ENCODE measurements at regions of chr2 and their contacts with region 1.

Region 1: GRCh38 chr2:96174251-96175144 is 29.3 kb upstream of the DUSP2 start:
- DNase-seq: peak; percentile 33 to 90
- H3K4me3 ChIP-seq: no peak overlapping the region
- H3K27ac ChIP-seq: no peak overlapping the region
- H3K4me1 ChIP-seq: no peaks in the 10 kb centered on the region
- H3K27me3 ChIP-seq: no peaks in the 10 kb centered on the region
- CTCF ChIP-seq: peak; percentile 90 to 96 (median 94)
- EP300 ChIP-seq: no peak
- POLR2A ChIP-seq: no peak
- RAD21 ChIP-seq: peak; percentile 93 to 96

Region 2: GRCh38 chr2:96024336-96025193 is 149.9 kb before region 1 on chr2:
- CTCF ChIA-PET with region 1: interaction called, 40 read pairs
- POLR2A ChIA-PET with region 1: no interaction called
- DNase-seq: no peak
- H3K4me3 ChIP-seq: no peak overlapping the region
- H3K27ac ChIP-seq: no peak overlapping the region
- H3K4me1 ChIP-seq: no peaks in the 10 kb centered on the region
- H3K27me3 ChIP-seq: no peaks in the 10 kb centered on the region
- CTCF ChIP-seq: peak in 2 of 3 experiments; percentile 19 to 20; a peak in 3 of 4 replicates
- EP300 ChIP-seq: no peak
- POLR2A ChIP-seq: no peak
- RAD21 ChIP-seq: 0 out of 4 replicates have a peak, but pooled peaks of 1 of the 2 experiments have one; percentile 7

Region 3: GRCh38 chr2:96091533-96092334 is 82.8 kb before region 1 on chr2:
- CTCF ChIA-PET with region 1: interaction called, 12 read pairs
- POLR2A ChIA-PET with region 1: no interaction called
- DNase-seq: peak in 1 of 2 experiments; percentile 54
- H3K4me3 ChIP-seq: no peak overlapping the region
- H3K27ac ChIP-seq: no peak overlapping the region
- H3K4me1 ChIP-seq: peaks cover 3 to 24% (median 10%) of the 10 kb centered on the region in 4 experiments
- H3K27me3 ChIP-seq: no peaks in the 10 kb centered on the region; a peak in 1 of 7 replicates
- CTCF ChIP-seq: no peak
- EP300 ChIP-seq: no peak
- POLR2A ChIP-seq: no peak
- RAD21 ChIP-seq: no peak

Region 4: GRCh38 chr2:96108541-96109360 is 65.7 kb before region 1 on chr2:
- CTCF ChIA-PET with region 1: interaction called, 21 read pairs
- POLR2A ChIA-PET with region 1: no interaction called
- DNase-seq: no peak
- H3K4me3 ChIP-seq: peak overlapping the region in 1 of 4 experiments; percentile 35; a peak in 1 of 8 replicates
- H3K27ac ChIP-seq: peak overlapping the region; percentile 15; the same call in 1 of the 2 replicates
- H3K4me1 ChIP-seq: peaks cover 0 to 25% (median 17%) of the 10 kb centered on the region in 4 experiments; a peak in 6 of 7 replicates
- H3K27me3 ChIP-seq: no peaks in the 10 kb centered on the region
- CTCF ChIP-seq: no peak
- EP300 ChIP-seq: peak in 1 of 2 experiments; percentile 26; a peak in 1 of 3 replicates
- POLR2A ChIP-seq: no peak
- RAD21 ChIP-seq: no peak

Region 5: DNA sequence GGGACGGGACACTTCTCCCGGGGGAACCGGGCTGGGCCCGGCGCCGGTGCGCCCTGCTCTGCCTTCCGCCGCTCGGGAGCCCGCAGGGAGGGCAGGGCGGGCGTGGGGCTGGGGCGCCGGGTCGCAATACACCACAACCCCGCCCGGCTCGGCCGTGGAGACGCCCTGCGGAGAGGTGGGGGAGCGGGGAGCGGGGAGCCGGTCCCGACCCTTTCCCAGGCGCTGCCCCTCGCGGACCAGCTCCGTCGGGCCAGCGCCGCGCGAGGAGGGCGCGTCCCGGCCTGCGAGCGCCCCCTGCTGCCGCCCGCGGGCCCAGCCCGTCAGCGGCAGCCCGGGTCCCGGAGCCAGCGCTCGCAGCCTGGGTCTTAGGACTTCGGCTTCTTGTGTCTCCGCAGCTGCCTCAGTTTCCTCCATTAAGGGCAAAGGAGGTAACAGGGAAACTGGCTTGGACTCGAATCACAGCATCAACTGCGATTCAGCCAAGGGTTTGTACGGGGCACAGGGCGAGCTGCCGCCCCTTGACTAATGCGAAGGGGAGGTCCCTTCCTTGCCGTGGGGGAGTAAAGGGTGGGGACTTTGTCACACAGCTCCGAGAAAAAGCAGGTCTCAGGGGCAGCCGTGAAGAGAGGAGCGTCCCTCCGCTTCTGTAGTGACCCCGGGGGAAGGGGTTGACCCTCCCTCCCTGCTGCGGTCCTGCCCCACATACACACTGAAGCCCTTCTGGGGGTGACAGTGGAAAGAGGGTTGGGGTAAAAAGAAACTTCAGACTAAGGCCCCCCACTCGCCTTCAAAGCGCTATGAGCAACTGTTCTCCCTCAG is 57.4 kb before region 1 on chr2:
- CTCF ChIA-PET with region 1: interaction called, 21 read pairs
- POLR2A ChIA-PET with region 1: interaction called, 4 read pairs
- DNase-seq: no peak
- H3K4me3 ChIP-seq: peak overlapping the region; percentile 57 to 81 (median 60)
- H3K27ac ChIP-seq: no peak overlapping the region; the same call in 1 of the 2 replicates
- H3K4me1 ChIP-seq: peaks cover 0 to 20% (median 12%) of the 10 kb centered on the region in 4 experiments; a peak in 6 of 7 replicates
- H3K27me3 ChIP-seq: peaks cover 0 to 32% (median 25%) of the 10 kb centered on the region in 4 experiments; a peak in 5 of 7 replicates
- CTCF ChIP-seq: peak in 2 of 3 experiments; percentile 81 to 95; a peak in 3 of 4 replicates
- EP300 ChIP-seq: no peak
- POLR2A ChIP-seq: no peak
- RAD21 ChIP-seq: peak; percentile 57 to 86

Region 6: GRCh38 chr2:96145036-96145847 is 29.3 kb before region 1 on chr2 and contains the start of gene DUSP2:
- CTCF ChIA-PET with region 1: interaction called, 155 read pairs
- POLR2A ChIA-PET with region 1: interaction called, 3 read pairs
- DNase-seq: peak in 1 of 2 experiments; percentile 81
- H3K4me3 ChIP-seq: peak within 1 kb of the TSS; percentile 38 to 69 (median 41)
- H3K27ac ChIP-seq: no peak within 1 kb of the TSS
- H3K4me1 ChIP-seq: peaks cover 0 to 42% (median 30%) of the 10 kb centered on the region in 4 experiments; a peak in 6 of 7 replicates
- H3K27me3 ChIP-seq: peaks cover 4 to 30% (median 20%) of the 10 kb centered on the region in 4 experiments; a peak in 6 of 7 replicates
- CTCF ChIP-seq: peak in 1 of 3 experiments; percentile 1; a peak in 1 of 4 replicates
- EP300 ChIP-seq: no peak
- POLR2A ChIP-seq: peak in 1 of 2 experiments; percentile 73; a peak in 2 of 3 replicates
- RAD21 ChIP-seq: no peak
- total RNA-seq, gene DUSP2: 8.7 and 10.1 TPM in 2 replicates

Region 7: GRCh38 chr2:96157651-96158553 is 16.6 kb before region 1 on chr2:
- CTCF ChIA-PET with region 1: interaction called, 47 read pairs
- POLR2A ChIA-PET with region 1: interaction called, 4 read pairs
- DNase-seq: no peak
- H3K4me3 ChIP-seq: no peak overlapping the region
- H3K27ac ChIP-seq: no peak overlapping the region
- H3K4me1 ChIP-seq: peaks cover 0 to 9% (median 1%) of the 10 kb centered on the region in 4 experiments; a peak in 3 of 7 replicates
- H3K27me3 ChIP-seq: no peaks in the 10 kb centered on the region; a peak in 1 of 7 replicates
- CTCF ChIP-seq: no peak
- EP300 ChIP-seq: no peak
- POLR2A ChIP-seq: no peak
- RAD21 ChIP-seq: no peak

Region 8: DNA sequence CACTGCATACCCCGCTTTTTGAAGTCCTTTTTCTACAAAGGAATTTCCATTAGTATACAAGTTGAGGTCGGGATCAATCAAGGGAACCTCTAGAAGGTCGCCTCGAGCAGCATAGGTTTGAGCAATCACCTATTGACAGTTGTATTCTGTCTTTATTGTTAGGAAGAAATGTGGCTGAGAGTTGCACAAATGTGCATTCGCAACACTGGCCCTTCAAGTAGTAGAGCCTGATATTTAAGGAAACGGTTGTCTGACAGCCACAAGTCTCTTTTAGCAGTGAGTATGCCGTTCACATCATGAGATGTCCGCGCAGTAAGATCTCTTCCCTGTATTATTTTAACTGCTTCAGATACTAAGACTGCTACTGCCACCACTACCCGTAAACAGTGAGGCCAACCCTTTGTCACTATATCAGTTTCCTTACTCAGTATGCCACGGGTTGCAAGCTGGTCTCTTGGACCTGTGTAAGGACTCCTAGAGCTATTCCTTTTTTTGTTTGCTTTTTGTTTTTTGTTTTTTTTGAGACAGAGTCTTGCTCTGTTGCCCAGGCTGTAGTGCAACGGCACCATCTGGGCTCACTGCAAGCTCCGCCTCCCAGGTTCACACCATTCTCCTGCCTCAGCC is 44.1 kb after region 1 on chr2:
- CTCF ChIA-PET with region 1: no interaction called
- POLR2A ChIA-PET with region 1: no interaction called
- DNase-seq: no peak
- H3K4me3 ChIP-seq: no peak overlapping the region
- H3K27ac ChIP-seq: no peak overlapping the region
- H3K4me1 ChIP-seq: no peaks in the 10 kb centered on the region
- H3K27me3 ChIP-seq: no peaks in the 10 kb centered on the region
- CTCF ChIP-seq: no peak
- EP300 ChIP-seq: no peak
- POLR2A ChIP-seq: no peak
- RAD21 ChIP-seq: no peak

Region 9: DNA sequence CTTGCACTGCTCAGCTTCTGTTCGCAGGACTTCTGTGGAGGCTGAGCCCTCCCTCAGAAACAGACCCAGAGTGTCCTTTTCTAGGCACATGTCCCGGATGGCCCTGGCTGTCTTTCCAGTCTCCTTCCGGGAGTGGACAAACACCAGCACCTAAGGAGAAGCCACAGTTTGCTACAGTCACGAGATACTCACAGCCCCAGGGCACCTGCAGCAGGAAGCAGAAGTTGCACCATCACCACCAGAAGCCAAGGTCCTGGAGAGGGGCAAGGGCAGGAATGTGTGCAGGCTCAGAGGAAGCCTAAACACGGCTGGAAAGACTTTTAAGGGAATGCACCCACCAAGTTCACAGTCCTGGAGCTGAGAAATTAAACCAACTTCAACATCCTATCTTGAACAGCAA is 117.3 kb after region 1 on chr2:
- CTCF ChIA-PET with region 1: no interaction called
- POLR2A ChIA-PET with region 1: no interaction called
- DNase-seq: no peak
- H3K4me3 ChIP-seq: no peak overlapping the region
- H3K27ac ChIP-seq: no peak overlapping the region
- H3K4me1 ChIP-seq: no peaks in the 10 kb centered on the region
- H3K27me3 ChIP-seq: no peaks in the 10 kb centered on the region
- CTCF ChIP-seq: no peak
- EP300 ChIP-seq: no peak
- POLR2A ChIP-seq: no peak
- RAD21 ChIP-seq: no peak

Measured in H1 (cell line).